Pancreas (tissue), 10 donors: ENCODE measurements at regions of chr2 and their contacts with region 1.

Region 1: DNA sequence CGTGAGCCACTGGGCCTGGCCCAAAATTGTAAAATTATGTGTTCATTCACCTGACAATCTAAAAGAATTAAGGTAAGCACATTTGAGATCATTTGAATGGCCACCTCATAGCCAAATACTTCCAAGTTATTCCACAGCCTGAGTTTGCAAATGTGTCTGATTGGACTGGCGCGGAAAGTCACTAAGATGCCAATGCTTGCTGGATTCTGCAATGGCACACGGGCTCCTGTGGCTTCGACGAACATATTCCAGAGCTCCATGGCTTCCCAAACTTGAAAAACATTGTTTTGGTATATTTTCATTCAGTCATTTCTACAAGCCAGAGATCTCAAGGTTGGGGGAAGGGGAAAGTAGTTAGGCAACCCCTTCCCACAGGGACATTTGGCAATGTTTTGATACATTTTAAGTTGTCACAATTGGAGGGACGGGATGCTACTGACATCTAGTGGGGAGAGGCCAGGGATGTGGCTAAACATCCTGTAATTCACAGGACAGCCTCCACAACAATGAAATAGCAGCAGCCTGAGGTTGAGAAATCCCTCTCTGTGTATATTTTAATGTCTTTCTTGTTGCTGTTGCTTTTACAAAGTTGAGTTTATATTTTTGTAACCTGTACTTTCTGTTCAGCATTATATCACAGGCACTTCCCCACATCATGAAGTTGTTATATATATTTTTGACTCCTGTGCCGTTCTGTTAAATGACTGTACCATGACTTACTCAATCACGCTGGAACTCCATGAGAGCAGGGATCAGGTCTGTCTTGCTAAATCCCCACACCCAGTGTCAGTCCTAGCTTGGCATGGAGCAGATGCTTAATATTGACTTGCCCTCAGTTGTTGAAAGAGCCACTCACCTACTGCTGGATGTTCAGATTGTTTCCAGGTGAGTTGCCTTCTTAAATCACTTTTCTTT is 56.9 kb downstream of the COL4A4 start:
- DNase-seq: peak in 3 of 6 donors; percentile 42 to 73 (median 54)
- ATAC-seq: peak; percentile 89 to 97 (median 94)
- H3K4me3 ChIP-seq: no peak overlapping the region
- H3K27ac ChIP-seq: no peak overlapping the region
- H3K4me1 ChIP-seq: peaks cover 2 to 12% (median 4%) of the 10 kb centered on the region in 3 donors
- H3K27me3 ChIP-seq: no peaks in the 10 kb centered on the region
- CTCF ChIP-seq: peak; percentile 34 to 64 (median 60)

Region 2: GRCh38 chr2:227033471-227034148 is 73.5 kb before region 1 on chr2:
- intact Hi-C with region 1: loop called in 1 of 3 experiments (anchors 10 kb)
- DNase-seq: peak; percentile 54 to 85 (median 72)
- ATAC-seq: peak; percentile 85 to 97 (median 94)
- H3K4me3 ChIP-seq: no peak overlapping the region
- H3K27ac ChIP-seq: no peak overlapping the region
- H3K4me1 ChIP-seq: peaks cover 0 to 8% (median 0%) of the 10 kb centered on the region in 3 donors
- H3K27me3 ChIP-seq: no peaks in the 10 kb centered on the region
- CTCF ChIP-seq: peak; percentile 38 to 68 (median 58)